GM18951 (cell line): ENCODE measurements at regions of chr16 and their contacts with region 1.

Region 1: GRCh38 chr16:27109666-27110523 is 43.2 kb downstream of the C16orf82 start:
- POLR2A ChIP-seq: no peak

Region 2: GRCh38 chr16:25838724-25839186 is 1271.1 kb before region 1 on chr16:
- in situ Hi-C with region 1: loop called (anchors 25 kb)
- POLR2A ChIP-seq: no peak

Region 3: GRCh38 chr16:26901196-26901861 is 208.6 kb before region 1 on chr16:
- in situ Hi-C with region 1: no loop called
- POLR2A ChIP-seq: no peak